MCF 10A (cell line): ENCODE measurements at regions of chr5 and their contacts with region 1.

Region 1: DNA sequence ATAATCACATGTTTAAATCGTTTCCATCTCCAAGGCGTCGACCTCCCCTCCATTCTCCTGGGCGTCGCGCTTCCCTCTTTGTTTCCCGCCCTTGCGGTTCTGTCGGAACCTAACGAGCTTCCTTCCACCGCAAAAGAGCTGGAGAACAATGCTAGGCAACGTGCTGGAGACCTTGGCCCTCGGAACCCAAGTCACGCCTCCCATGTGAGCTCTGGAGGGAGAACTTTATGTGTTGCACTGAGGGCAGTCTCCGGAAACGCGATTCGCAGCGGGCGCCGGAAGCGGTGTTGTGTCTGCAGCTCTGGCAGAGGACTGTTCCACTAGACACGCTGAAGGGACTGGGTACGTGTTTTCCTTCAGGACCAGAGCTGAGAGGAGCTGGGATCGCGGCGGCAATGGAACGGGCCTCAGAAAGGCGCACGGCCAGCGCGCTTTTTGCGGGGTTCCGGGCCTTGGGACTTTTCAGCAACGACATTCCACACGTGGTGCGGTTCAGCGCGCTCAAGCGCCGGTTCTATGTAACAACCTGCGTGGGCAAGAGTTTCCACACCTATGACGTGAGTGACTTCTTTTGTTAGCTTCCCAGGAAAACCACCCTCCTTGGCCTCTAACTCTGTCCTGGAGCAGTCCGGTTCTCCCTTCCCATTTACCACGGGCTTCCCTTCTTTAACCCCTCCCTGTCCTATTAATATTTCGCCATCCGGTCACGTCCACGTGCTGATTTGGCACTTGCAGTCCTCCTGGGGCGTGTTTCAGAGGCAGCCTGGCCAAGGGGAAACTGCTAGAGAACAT is at the start of gene WDR36:
- DNase-seq: peak; percentile 94
- H3K4me3 Mint-ChIP-seq: peak within 1 kb of the TSS; percentile 96
- H3K27ac Mint-ChIP-seq: peak within 1 kb of the TSS; percentile 85
- H3K4me1 Mint-ChIP-seq: peaks cover 22% of the 10 kb centered on the region
- H3K27me3 Mint-ChIP-seq: no peaks in the 10 kb centered on the region
- CTCF ChIP-seq: no peak
- total RNA-seq, gene WDR36: 43.8 and 52.3 TPM in 2 replicates

Region 2: DNA sequence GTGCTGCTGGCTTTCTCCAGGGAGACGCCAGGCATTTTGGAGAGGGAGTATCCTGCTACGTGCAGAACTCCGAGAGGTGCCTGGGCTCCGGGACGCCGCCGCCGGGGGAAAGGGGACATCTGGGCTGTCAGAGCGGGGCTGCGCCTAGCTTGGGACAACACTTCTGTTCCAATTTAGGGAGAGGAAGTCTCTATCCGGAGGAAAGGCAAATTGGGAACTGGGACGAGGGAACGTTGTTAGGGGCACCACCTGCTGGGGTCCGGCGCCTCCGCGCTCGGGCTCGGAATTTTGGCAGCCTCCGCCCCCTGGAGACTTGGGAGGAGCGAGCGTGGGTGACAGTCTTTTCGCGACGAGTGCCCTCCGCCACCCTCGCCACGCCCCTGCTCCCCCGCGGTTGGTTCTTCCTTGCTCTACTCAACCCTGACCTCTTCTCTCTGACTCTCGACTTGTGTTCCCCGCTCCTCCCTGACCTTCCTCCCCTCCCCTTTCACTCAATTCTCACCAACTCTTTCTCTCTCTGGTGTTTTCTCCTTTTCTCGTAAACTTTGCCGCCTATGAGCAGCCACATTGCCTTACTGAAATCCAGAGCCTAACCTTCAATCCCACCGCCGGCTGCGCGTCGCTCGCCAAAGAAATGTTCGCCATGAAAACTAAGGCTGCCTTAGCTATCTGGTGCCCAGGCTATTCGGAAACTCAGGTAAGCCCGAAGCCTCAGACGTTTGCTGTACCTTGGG is 19.1 kb before region 1 on chr5:
- CTCF ChIA-PET with region 1: interaction called, 3 read pairs
- POLR2A ChIA-PET with region 1: interaction called, 31 read pairs
- intact Hi-C with region 1: loop called (anchors 2 kb)
- DNase-seq: peak; percentile 33
- H3K4me3 Mint-ChIP-seq: peak overlapping the region; percentile 80
- H3K27ac Mint-ChIP-seq: peak overlapping the region; percentile 81
- H3K4me1 Mint-ChIP-seq: peaks cover 23% of the 10 kb centered on the region
- H3K27me3 Mint-ChIP-seq: no peaks in the 10 kb centered on the region
- CTCF ChIP-seq: no peak

Region 3: DNA sequence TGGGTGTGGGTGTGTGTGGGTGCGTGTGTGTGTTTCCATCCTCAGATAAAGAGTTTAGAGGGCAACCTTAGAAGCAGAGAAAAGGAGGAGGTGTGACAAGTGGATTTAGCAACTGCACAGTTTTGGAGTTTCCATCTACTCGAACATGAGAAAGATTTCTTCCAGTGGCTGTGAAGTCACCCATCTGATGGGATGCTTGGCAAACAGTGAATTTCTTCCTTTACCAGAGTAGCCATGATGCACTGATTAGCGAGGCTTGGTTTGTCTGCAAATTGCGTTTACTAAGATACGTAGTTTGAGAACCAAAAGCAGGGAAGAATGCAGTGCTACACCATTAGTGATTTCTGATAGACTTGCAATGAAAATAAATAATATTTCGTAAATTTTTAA is 420.9 kb after region 1 on chr5:
- CTCF ChIA-PET with region 1: no interaction called
- POLR2A ChIA-PET with region 1: no interaction called
- intact Hi-C with region 1: no loop called
- DNase-seq: no peak
- H3K4me3 Mint-ChIP-seq: peak overlapping the region; percentile 76
- H3K27ac Mint-ChIP-seq: peak overlapping the region; percentile 65
- H3K4me1 Mint-ChIP-seq: peaks cover 35% of the 10 kb centered on the region
- H3K27me3 Mint-ChIP-seq: no peaks in the 10 kb centered on the region
- CTCF ChIP-seq: no peak